ENCODE measurements at regions of chr2 and their contacts with region 1.

Region 1: DNA sequence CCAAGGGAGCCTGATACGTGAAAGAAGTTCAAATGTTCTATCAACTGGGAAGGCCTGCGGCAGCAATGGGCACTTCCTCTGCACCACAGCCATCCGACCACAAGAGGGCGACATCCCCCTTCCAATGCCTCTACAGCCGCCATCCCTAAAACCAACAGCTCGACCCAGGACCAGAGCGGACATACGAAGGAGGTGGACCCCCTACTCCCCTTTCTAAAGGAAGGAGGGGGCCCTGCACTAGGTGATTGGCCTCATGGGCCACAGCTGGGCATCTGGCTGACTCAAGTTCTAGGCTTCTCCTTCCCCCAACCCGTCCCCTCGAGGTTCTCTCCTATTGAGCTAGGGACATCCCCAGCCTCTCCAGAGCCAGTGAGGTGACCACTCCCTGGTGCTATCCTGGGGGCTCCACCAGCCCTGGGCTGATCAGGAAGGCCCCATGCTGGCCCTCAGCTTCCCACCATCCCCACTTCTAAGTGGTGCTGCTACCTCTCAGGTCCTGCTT is 217.2 kb downstream of the TNS1 start:
- DNase-seq: peak; percentile 82 to 97
- H3K4me3 ChIP-seq: no peak overlapping the region
- CTCF ChIP-seq: peak in 1 of 3 donors; percentile 92
- POLR2A ChIP-seq: no peak

Region 2: GRCh38 chr2:217489145-217489960 is 296.2 kb before region 1 on chr2:
- intact Hi-C with region 1: no loop called
- DNase-seq: peak; percentile 53 to 86
- H3K4me3 ChIP-seq: no peak overlapping the region
- CTCF ChIP-seq: no peak
- POLR2A ChIP-seq: no peak

Region 3: DNA sequence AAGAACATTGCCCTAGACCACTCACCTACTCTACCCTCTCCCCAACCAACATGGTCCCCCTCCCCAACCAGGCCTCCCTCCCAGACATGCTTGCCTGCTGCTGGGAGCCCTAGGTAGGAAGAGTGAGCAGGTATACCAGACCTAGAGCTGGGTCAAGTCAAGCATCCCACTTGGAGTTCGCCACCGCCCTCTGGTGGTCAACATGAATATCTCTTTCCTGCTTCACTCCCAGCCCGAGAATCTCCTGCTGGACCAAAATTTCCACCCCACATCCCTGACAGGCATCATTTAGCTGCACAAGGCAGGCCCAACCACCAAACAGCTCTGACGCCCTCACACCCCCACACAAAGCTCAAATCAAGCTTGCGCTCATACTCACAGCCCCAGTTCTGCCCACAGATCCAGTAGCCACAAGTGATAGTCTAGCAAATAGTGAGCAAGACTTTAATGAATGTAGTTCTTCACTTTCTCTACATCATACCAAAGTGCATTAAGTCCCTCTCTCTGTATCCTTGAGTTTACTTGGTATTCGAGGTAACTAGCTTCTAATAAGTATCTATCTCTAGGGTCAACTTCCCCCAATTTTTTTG is 101.2 kb after region 1 on chr2:
- intact Hi-C with region 1: loop called (anchors 2 kb)
- DNase-seq: peak; percentile 57 to 96
- H3K4me3 ChIP-seq: no peak overlapping the region
- CTCF ChIP-seq: peak in 1 of 3 donors; percentile 51
- POLR2A ChIP-seq: no peak

Region 4: DNA sequence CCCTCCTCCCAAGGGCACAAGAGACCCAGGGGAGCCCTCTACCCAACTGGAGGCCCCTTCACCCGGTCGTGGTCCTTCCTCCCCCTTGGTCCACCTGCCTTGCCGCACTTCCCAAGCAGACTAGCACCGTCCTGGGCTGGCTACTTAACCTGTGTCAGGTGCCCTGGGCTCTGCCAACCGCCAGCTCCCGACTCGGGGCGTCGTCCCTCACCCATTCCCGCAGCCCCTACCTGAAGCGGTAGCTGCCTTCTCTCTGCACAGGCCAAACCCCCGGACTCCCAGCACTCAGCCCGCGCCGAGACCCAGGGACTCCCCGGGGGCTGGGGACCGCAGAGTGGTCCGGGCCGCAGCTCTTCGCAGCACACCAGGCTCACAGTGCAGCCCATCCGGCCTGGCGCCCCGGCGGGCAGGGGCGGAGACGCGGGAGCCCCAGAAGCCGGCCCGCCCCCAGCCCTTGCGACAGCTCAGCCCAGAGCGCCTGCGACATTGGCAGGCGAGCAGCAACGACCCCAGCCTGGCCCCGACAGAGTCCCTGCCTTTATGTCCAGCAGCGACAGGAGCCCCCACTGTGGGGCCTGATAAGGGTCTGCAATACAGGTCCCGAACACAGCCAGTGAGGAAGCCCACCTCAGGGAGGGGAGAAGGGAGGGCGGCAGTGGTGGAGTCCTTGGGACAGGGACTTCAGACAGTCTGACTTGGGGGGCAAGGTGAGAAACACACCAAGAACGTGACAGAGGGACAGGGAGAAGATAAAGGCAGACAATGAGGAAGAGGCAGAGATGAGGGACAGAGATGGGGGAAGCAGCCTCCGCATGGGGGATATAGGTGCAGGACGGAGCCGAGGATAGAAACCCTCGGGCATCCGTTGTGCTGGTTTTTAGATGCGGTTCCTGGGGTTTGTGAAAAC is 248.2 kb after region 1 on chr2:
- intact Hi-C with region 1: loop called (anchors 2 kb)
- DNase-seq: peak in 1 of 2 donors; percentile 84
- H3K4me3 ChIP-seq: no peak overlapping the region
- CTCF ChIP-seq: no peak
- POLR2A ChIP-seq: no peak

Region 5: DNA sequence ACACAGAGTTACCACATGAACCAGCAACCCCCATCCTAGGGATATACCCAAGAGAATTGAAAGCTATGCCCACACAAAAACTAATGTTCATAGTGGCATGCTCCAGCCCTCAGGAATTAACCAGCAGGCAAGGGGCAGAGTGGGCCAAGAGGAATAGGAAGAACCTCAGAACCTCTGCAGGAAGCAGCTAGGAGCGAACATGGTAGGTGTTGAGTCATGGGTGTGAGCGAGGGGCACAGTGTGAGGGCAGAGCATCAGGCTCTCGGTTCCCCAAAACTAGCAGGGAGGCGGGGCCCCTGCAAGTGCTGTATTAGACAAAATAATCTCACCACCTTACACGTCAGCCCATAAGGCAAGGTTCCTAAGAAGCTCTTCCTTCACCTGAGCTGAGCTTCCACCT is 277.9 kb after region 1 on chr2:
- intact Hi-C with region 1: loop called (anchors 10 kb)
- DNase-seq: peak in 1 of 2 donors; percentile 75
- H3K4me3 ChIP-seq: no peak overlapping the region
- CTCF ChIP-seq: no peak
- POLR2A ChIP-seq: no peak

Region 6: GRCh38 chr2:218860950-218861381 is 1075.4 kb after region 1 on chr2:
- intact Hi-C with region 1: no loop called
- DNase-seq: peak in 1 of 2 donors; percentile 88
- H3K4me3 ChIP-seq: no peak overlapping the region
- CTCF ChIP-seq: no peak
- POLR2A ChIP-seq: no peak

Measured in lower leg skin (tissue), 4 donors.